WTC11 (cell line): ENCODE measurements at regions of chr17 and their contacts with region 1.

Region 1: DNA sequence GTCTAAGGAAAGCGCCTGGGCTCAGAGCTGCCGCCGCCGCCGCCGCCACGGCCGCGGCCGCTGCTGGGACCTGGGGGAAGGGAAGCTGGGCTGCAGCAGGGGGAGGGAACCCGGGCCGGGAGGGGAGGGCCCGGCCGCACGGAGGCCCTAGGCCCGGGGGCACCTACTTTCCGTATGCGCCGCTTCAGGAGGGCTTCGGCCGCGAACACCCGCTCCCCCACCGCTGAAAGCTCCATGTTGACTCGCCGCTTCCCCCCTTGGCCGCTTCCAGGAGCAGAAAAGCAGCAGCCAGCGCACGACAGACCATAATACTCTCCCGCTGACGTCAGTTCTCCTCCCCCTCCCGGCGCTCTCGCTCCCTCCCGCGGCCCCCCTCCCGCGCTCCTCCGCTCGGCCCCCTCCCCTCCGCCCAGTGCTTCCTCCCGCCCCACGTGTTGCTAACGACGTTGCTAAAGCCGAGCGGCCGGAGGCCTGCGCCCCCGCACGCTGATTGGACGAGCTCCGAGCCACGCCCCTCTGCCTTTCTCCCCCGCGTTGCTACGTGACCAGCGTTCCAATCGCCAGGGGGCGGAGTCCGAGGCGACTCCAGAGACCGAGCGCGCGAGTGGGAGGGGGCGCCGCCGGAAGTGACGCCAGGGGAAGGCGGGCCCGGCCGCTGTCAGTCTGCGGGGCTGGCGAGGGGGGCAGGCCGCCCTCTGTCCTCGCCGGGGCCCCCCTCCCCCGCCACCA is at the start of gene CBX8:
- DNase-seq: peak; percentile 100
- ATAC-seq: peak; percentile 71
- H3K4me3 Mint-ChIP-seq: peak within 1 kb of the TSS; percentile 68
- H3K27ac Mint-ChIP-seq: no peak within 1 kb of the TSS
- H3K4me1 Mint-ChIP-seq: peaks cover 47% of the 10 kb centered on the region
- H3K27me3 Mint-ChIP-seq: peaks cover 94% of the 10 kb centered on the region
- CTCF ChIP-seq: no peak
- total RNA-seq, gene CBX8: 1.8 to 2.1 TPM (median 2.0 TPM) in 3 replicates

Region 2: DNA sequence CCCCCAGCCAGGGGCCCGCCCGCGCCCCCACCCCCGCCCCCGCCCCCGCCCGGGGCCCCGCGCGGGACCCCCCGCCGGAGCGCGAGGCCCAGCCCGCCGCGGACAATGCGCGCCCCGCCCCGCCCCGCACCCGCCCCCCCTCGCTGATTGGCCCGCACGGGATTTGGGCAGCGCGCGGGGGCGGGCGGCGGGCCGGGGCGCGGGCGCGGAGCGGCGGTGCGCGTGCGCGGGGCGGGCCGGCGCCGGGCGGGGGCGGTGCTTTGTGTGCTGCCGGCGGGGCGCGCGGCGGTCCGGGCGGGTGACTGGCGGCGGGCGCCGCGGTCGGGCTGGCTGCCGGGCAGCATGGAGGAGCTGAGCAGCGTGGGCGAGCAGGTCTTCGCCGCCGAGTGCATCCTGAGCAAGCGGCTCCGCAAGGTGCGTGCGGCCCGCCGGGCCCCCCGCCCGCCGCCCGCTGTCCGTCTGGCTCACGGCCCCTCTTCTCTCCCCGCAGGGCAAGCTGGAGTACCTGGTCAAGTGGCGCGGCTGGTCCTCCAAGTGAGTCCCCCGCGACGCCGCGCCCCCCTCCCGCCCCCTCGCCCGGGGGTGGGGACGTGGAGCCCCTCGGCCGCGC is 18.9 kb before region 1 on chr17 and contains the start of gene CBX2:
- CTCF ChIA-PET with region 1: interaction called, 10 read pairs
- POLR2A ChIA-PET with region 1: interaction called, 5 read pairs
- DNase-seq: peak; percentile 75
- ATAC-seq: peak; percentile 55
- H3K4me3 Mint-ChIP-seq: peak within 1 kb of the TSS; percentile 91
- H3K27ac Mint-ChIP-seq: peak within 1 kb of the TSS; percentile 93
- H3K4me1 Mint-ChIP-seq: peaks cover 54% of the 10 kb centered on the region
- H3K27me3 Mint-ChIP-seq: peaks cover 15% of the 10 kb centered on the region
- CTCF ChIP-seq: no peak
- total RNA-seq, gene CBX2: 78.1 to 85.5 TPM (median 78.7 TPM) in 3 replicates

Region 3: DNA sequence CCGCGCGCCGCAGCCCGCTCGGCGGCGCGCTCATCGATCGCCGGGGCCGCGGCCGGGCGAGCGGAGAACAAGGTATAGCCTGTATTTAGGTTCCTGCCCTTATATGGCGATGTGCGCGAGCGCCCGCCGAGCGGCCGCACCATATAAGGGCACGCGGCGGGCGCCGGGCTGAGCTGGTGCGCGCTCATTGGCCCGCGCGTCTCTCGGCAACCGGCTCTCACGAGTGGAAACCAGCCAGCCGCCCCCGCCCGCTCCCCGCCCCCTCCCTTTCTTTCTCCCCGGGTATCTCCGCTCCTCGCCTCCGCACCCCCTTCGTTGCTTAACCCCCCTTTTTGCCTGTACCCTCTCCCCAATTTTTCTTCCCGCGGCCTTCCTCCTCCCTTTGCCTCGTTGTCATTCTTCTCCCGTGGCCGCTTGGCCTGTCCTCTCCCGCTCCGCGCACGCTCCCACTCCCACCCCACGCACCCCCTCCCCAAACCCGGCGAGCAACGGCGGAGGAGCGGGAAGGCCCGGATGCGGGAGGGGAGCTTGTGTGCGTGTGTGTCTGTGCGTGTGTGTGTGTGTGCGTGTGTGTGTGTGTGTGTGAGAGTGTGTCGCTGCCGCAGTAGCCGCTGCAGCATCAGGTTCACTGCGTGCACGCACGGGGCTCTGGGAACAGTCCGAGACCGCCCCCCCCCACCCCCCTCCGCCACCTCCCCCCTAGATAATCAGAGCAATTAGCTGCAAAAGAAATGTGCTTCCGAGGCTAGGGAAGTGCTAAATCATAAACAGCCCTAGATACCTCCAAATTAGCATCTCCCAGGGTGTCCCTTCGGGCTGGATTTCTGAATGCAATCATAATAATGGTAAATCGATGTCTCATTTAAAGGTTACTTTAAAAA is 13.4 kb after region 1 on chr17:
- CTCF ChIA-PET with region 1: interaction called, 17 read pairs
- POLR2A ChIA-PET with region 1: interaction called, 9 read pairs
- DNase-seq: peak; percentile 83
- ATAC-seq: peak; percentile 74
- H3K4me3 Mint-ChIP-seq: peak overlapping the region; percentile 59
- H3K27ac Mint-ChIP-seq: no peak overlapping the region
- H3K4me1 Mint-ChIP-seq: peaks cover 40% of the 10 kb centered on the region
- H3K27me3 Mint-ChIP-seq: peaks cover 92% of the 10 kb centered on the region
- CTCF ChIP-seq: no peak

Region 4: GRCh38 chr17:79852748-79853147 is 55.8 kb after region 1 on chr17:
- CTCF ChIA-PET with region 1: no interaction called
- POLR2A ChIA-PET with region 1: no interaction called
- DNase-seq: no peak
- ATAC-seq: no peak
- H3K4me3 Mint-ChIP-seq: no peak overlapping the region
- H3K27ac Mint-ChIP-seq: no peak overlapping the region
- H3K4me1 Mint-ChIP-seq: peaks cover 3% of the 10 kb centered on the region
- H3K27me3 Mint-ChIP-seq: peaks cover 17% of the 10 kb centered on the region
- CTCF ChIP-seq: no peak